Heart left ventricle (tissue), 16 donors: ENCODE measurements at regions of chr1 and their contacts with region 1.

Region 1: DNA sequence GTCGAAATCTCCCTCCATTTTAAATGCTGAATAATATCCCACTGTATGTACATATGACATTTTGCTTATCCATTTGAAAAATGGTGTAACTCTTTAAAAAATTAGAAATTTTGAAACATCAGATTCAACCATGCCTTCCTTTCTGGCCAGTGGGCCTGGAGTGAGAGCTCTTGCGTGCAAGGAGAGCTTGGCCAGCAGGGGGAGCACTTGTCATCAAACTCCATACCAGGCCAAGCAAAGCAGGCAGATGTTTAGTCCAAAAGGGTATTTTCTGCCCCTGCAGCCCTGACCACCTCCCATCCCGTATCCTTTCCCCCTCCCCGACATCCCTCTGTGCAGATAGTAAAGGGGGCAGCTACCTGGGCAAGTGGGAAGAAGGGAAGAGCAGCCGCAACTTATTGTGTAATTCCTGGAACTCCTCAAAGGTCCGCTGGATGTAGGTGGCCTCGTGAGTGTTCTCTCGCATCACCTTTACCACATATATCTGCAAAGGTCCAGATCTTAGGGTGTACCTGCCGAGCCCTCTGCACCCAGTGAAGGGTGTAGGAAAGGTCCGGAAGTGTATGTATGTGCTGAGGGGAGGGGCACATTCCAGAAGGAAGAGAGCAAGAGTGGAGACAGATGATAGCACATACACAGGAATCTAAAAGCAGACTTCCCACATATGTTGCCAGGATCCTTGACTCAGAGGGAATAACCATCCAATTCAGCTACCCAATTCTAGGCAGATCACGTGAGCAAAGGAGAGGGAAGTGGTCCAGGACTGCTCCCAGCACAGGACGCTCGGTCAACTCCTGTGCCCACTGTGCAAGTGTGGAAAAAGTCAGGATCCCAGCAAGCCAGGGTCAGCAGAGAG is 19.9 kb upstream of the PPP1R15B start:
- DNase-seq: peak; percentile 71 to 87 (median 82)
- ATAC-seq: peak; percentile 40 to 81 (median 66)
- H3K4me3 ChIP-seq: no peak overlapping the region
- H3K27ac ChIP-seq: peak overlapping the region in 3 of 12 donors; percentile 8 to 45 (median 24)
- H3K4me1 ChIP-seq: peaks cover 0 to 37% (median 9%) of the 10 kb centered on the region in 12 donors
- H3K27me3 ChIP-seq: no peaks in the 10 kb centered on the region
- CTCF ChIP-seq: peak; percentile 82 to 96 (median 91)
- POLR2A ChIP-seq: no peak

Region 2: GRCh38 chr1:204506961-204507387 is 75.4 kb after region 1 on chr1:
- intact Hi-C with region 1: loop called in 8 of 10 experiments (anchors 1 to 5 kb)
- DNase-seq: peak in 4 of 5 donors; percentile 72 to 83 (median 78)
- ATAC-seq: peak; percentile 77 to 89 (median 82)
- H3K4me3 ChIP-seq: peak overlapping the region; percentile 5 to 76 (median 60)
- H3K27ac ChIP-seq: peak overlapping the region; percentile 70 to 89 (median 84)
- H3K4me1 ChIP-seq: peaks cover 0 to 34% (median 7%) of the 10 kb centered on the region in 12 donors
- H3K27me3 ChIP-seq: no peaks in the 10 kb centered on the region
- CTCF ChIP-seq: no peak
- POLR2A ChIP-seq: peak in 1 of 2 donors; percentile 7

Region 3: DNA sequence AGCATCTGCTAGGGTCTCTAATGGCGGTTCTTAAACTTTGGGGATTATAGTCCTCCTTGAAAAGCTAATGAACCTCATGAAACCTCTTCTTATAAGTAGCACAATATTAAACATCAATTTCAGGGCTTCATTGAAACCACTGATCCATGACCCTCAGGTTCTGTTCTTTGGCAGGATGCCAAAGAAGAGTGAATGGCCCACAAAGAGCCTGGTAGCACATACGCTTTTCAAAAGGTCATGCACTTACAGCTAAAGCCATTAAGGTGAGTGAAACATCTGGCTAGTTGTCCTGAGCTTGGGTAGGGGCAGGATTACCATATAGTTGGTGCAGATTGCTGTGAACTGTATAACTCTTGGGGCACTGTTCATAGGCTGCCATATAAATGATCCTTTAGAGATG is 126.9 kb after region 1 on chr1:
- intact Hi-C with region 1: no loop called
- DNase-seq: no peak
- ATAC-seq: no peak
- H3K4me3 ChIP-seq: no peak overlapping the region
- H3K27ac ChIP-seq: no peak overlapping the region
- H3K4me1 ChIP-seq: peaks cover 0 to 12% (median 0%) of the 10 kb centered on the region in 12 donors
- H3K27me3 ChIP-seq: no peaks in the 10 kb centered on the region
- CTCF ChIP-seq: no peak
- POLR2A ChIP-seq: no peak

Region 4: DNA sequence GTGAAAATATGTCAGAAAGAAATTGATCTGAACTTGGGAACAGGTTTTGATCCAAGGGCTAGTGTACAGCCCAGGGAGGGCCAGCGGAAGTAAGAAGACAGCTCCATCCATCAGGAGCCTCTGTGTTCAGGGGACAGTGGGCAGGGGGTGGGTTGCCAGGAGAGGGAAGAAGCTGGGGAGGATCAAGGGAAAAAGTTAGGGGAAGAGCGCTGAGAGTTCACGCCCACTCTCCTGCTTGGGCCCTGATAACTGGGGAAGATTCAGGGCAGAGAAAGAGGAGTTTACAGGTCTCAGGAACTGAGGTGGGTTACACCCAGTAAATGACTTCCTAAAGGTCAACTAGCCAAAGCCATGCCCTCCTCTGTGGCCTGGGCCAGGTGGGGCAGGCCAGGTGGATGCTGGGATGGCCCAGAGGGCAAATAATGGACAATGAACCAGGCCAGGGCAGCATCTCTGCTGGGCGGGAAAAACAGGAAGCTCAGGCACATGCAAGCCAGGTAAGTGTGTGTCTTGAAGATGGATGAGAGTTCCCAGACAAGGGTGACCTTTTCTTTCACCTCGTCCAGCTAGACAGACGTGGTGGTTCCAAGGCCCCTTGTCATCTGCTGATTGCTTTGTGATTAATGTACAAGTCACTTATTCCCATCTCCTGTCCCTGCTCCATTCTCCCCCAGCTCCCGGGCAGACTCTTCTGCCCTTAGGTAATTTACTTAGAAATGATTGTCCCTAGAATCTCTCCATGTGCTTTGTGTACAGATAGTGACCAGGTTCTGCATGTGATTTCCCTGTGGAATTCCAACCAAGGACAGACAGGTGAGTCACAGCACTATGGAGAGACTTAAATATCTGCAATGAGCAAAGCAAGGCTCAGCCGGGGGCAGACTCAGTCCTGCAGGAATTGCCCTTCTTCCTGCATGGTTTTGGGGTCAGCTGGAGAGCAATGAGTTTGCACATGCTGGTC is 141.7 kb after region 1 on chr1:
- intact Hi-C with region 1: no loop called
- DNase-seq: no peak
- ATAC-seq: no peak
- H3K4me3 ChIP-seq: no peak overlapping the region
- H3K27ac ChIP-seq: no peak overlapping the region
- H3K4me1 ChIP-seq: peaks cover 0 to 16% (median 3%) of the 10 kb centered on the region in 12 donors
- H3K27me3 ChIP-seq: no peaks in the 10 kb centered on the region
- CTCF ChIP-seq: no peak
- POLR2A ChIP-seq: no peak

Region 5: DNA sequence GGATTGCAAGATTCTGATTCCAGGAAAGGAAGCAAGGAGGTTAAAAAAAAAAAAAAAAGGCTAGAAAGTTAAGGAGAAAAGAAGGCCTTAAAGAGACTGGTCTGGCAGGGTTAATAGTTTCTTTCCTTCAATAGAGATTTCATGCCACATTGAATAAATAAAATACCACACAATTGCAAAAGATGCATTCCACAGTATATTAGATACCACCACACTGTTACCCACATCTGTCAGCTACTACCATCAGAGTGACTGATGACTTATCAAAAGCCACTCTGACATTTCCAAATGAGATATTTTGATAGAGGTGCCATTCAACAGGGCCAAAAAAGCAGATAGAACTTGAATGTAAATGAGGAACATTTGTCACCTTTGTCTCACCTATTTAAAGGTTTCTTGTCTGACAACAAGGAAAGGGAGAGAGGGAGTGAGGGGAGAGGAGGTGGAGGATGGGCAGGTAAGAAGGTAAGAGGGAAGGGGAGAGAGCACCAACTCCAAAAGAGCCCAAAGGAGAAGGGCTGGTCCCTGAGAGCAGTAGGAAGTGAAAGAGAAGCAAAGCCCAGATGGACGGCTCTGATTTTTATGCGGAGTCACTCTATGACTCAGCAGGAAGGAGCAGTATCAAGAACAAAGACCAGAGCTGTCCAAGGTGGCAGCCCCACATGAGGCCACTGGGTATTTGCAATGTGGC is 215.7 kb after region 1 on chr1:
- intact Hi-C with region 1: no loop called
- DNase-seq: no peak
- ATAC-seq: peak in 3 of 4 donors; percentile 59 to 73 (median 68)
- H3K4me3 ChIP-seq: no peak overlapping the region
- H3K27ac ChIP-seq: no peak overlapping the region
- H3K4me1 ChIP-seq: peaks cover 0 to 5% (median 0%) of the 10 kb centered on the region in 12 donors
- H3K27me3 ChIP-seq: peaks cover 0 to 18% (median under 1%) of the 10 kb centered on the region in 9 donors
- CTCF ChIP-seq: no peak
- POLR2A ChIP-seq: no peak

Region 6: DNA sequence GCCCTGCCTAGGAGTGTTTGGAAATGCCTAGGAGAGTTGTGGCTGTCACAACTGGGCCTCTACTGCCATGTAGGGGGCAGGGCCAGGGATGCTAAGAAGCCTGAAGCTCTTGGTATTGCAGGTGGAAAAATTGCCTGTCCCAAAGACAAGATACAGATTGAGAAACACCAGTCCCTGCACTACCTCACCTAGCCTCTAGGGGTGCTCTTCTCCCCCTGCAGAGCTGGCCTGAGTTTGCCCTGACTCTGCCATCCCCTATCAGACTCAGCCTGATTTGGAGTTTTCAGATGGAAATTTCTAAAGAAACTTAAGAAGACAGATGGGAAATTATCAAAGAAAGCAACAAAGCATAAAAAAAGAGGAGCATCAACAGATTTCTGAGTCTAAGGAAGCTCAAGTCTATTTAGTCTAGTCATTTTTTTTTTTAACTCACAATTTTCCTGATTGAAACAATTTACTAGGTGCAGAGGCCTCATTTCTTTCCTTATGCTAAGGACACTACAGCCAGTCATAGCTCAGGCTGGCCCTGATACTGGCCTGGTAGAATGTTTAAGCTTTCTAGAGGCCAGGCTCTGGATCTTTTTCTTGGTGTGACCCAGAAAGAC is 315.4 kb after region 1 on chr1:
- intact Hi-C with region 1: no loop called
- DNase-seq: peak in 1 of 5 donors; percentile 28
- ATAC-seq: peak in 1 of 4 donors; percentile 64
- H3K4me3 ChIP-seq: no peak overlapping the region
- H3K27ac ChIP-seq: no peak overlapping the region
- H3K4me1 ChIP-seq: no peaks in the 10 kb centered on the region
- H3K27me3 ChIP-seq: peaks cover 0 to 53% (median 2%) of the 10 kb centered on the region in 9 donors
- CTCF ChIP-seq: peak; percentile 80 to 97 (median 90)
- POLR2A ChIP-seq: no peak